Sciatic nerve (tissue), 2 donors: ENCODE measurements at regions of chr3 and their contacts with region 1.

Region 1: DNA sequence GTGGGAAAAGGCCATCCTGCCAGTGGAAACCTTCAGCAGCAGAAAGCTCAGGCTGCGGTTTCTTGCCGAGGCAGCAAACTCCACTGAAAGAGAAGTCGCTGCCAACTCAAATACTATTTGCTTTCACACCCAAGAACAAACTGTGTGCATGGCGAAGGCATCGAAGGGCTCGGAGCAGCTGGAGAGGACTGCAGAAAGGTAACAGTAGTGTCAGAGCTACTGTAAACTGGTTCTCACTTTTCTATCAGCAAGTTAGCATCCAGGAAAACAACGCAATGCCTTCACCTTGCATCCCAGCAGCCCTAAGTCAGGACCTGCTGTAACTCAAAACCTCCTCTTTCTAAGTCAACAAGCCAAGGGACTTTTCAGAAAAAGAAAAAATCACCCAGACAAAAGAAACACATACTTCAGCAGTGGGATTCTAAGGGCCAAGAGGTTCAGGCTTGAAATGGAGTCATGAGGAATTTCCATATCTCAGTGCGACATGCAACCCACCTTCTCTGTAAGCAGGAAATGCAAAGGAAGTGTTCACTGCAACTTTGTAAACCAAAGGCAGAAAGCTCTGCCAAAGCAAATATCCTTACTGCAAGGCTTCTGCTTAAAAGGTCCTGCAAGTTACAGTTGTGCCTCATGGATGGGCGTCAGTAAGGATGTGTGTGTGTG is 193.5 kb downstream of the FOXP1 start:
- DNase-seq: no peak
- ATAC-seq: peak; percentile 80

Region 2: GRCh38 chr3:71504250-71505036 is 114.4 kb after region 1 on chr3:
- intact Hi-C with region 1: loop called (anchors 5 kb)
- DNase-seq: no peak
- ATAC-seq: peak; percentile 59

Region 3: GRCh38 chr3:71583566-71584449 is 193.8 kb after region 1 on chr3 and contains the start of gene FOXP1:
- intact Hi-C with region 1: no loop called
- DNase-seq: peak; percentile 81
- ATAC-seq: peak; percentile 67
- total RNA-seq, gene FOXP1: 137 TPM